ENCODE measurements at regions of chr16 and their contacts with region 1.

Region 1: DNA sequence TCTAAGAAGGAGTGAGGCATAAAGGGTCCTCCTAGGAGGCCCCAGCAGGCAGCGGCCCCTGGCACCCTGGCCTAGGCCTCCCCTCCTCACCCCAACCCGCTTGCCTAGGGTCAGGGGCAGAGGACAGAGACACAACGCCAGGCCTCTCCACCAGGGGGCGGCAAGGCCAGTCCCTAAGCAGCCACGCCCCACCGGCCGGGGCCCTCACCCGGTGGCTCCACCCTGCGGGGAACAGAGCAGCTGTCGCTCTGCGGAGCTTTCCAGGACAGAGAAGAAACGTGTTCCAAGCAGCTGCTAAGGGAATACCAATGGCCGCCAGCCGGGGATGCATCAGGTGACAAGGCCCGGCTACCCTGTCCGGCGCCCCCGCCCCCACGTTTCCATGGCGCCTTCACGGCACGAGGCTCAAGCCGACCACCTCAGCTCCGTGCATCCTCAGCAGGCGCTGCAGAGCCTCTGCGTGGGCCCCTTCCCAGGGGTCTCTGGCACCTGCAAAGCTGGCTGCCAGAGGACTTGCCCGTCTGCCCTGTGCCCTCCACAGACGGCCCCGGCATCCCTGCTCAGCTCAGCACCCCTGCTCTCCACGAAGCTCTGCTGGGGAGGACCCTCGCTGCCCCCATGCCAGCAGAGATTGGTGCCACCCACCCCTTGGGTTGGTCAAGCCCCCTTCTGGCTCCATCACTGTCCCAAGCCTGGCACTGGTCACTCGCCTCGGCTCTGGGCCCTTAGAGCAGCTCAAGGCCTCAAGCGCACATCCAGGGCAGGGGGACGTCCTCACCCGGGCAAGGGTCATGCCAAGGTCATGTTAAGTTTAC is 5.6 kb downstream of the ZNF598 start:
- H3K4me3 ChIP-seq: no peak overlapping the region
- H3K27ac ChIP-seq: peak overlapping the region; percentile 61; the same call in 1 of the 2 replicates
- H3K4me1 ChIP-seq: peaks cover 27% of the 10 kb centered on the region
- CTCF ChIP-seq: peak; percentile 99

Region 2: DNA sequence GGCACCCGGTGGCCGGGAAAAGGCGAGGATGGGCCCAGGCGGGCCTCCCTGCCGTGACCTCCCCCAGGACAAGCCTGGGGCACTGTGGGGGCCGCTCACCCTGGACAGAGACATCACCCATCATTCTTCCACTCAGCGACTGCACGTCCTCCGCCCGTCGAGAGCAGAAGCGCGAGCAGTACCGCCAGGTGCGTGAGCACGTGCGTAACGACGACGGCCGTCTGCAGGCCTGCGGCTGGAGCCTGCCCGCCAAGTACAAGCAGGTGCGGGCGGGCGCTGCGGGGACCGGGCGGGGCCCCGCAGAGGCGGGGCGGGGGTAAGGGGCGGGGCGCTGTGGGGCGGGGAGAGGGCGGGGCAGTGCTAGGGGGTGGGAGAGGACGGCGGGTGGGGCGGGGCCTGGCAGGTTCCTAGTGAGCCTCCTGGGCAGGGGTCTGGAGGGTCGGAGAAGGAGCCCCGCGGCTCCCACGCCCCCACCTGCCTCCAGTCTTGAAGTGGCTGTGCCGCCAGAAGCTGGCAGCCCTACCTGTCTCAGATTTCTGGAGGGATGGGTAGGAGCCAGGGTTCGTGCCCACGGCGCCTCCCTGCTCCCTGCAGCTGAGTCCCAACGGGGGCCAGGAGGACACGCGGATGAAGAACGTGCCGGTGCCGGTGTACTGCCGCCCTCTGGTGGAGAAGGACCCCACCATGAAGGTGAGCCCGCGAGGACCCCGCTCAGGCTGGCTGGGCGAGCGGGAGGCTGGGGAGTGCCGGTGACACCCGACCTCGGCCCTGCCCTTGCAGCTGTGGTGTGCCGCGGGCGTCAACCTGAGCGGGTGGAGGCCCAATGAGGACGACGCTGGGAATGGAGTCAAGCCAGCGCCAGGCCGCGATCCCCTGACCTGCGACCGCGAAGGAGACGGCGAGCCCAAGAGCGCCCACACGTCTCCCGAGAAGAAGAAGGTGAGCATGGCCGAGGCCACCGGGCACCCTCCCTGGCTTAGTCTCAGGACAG is 240.2 kb before region 1 on chr16:
- CTCF ChIA-PET with region 1: no interaction called
- POLR2A ChIA-PET with region 1: no interaction called
- H3K4me3 ChIP-seq: no peak overlapping the region
- H3K27ac ChIP-seq: no peak overlapping the region
- H3K4me1 ChIP-seq: no peaks in the 10 kb centered on the region
- CTCF ChIP-seq: peak; percentile 34

Region 3: GRCh38 chr16:1863681-1864460 is 140.2 kb before region 1 on chr16:
- CTCF ChIA-PET with region 1: interaction called, 34 read pairs
- POLR2A ChIA-PET with region 1: interaction called, 4 read pairs
- H3K4me3 ChIP-seq: no peak overlapping the region
- H3K27ac ChIP-seq: no peak overlapping the region
- H3K4me1 ChIP-seq: no peaks in the 10 kb centered on the region; the same call in 1 of the 2 replicates
- CTCF ChIP-seq: no peak

Region 4: DNA sequence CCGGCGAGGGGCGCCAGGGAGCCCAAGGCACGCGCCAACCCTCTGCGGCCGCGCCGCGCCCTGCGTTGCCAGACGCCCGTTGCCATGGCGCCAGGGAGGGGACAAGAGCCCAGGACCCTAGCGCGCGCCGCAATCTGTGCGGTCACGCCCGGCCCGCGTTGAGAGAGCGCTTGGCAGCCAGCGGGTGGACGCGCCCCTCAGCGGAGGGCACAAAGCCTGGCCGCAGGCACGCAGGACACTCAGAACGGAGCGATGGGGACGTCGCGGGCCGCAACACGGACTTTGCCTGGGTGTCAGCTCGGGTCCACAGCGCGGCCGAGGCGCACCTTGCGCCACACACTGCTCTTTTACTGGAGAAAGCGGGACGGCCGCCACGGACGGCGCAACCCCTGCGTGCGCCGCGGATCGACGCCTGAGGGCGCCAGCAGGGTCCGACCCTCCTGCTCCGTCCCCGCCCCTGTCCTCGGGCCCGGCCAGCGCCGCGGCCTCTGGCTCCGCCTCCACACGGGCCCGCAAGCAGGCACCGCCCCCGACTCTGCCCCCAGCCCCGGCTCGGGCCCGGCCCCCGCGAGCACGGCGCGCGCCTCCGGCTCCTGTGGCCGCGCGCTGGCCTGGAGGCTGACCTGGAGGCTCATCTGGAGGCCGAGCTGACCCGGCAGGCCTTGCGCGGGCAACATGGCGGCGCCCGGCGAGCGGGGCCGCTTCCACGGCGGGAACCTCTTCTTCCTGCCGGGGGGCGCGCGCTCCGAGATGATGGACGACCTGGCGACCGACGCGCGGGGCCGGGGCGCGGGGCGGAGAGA is 20.3 kb before region 1 on chr16 and contains the start of gene GFER:
- CTCF ChIA-PET with region 1: interaction called, 28 read pairs
- POLR2A ChIA-PET with region 1: interaction called, 4 read pairs
- H3K4me3 ChIP-seq: peak within 1 kb of the TSS; percentile 73
- H3K27ac ChIP-seq: peak within 1 kb of the TSS; percentile 83
- H3K4me1 ChIP-seq: peaks cover 7% of the 10 kb centered on the region; the same call in 1 of the 2 replicates
- CTCF ChIP-seq: peak; percentile 91

Region 5: DNA sequence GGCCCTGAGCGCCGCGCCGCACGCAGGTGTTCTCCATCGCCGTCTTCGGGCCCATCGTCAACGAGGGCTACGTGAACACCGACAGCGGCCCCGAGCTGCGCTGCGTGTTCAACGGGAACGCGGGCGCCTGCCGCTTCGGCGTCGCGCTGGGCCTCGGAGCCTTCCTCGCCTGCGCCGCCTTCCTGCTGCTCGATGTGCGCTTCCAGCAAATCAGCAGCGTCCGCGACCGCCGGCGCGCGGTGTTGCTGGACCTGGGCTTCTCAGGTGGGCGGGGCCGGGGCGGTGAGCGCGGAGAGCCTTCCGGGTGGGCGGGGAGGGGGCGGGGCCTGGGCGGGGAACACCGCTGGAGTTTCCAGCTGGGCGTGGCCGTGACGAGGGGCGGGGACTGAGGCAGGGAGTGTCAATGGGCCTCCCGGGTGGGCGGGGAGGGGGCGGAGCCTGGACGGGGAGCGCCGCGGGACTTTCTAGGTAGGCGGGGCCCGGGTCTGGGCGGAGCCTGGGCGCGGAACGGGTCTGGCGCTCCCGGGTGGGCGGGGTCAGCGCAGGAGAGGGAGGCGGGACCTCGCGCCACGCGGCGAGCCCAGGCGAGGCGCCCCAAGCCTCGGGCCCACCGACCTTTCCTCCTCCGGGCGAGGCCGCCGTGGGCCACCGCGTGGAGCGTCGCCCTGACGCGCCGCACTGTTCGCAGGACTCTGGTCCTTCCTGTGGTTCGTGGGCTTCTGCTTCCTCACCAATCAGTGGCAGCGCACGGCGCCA is 11.9 kb before region 1 on chr16:
- CTCF ChIA-PET with region 1: interaction called, 39 read pairs
- POLR2A ChIA-PET with region 1: interaction called, 4 read pairs
- H3K4me3 ChIP-seq: no peak overlapping the region
- H3K27ac ChIP-seq: no peak overlapping the region
- H3K4me1 ChIP-seq: peaks cover 3% of the 10 kb centered on the region
- CTCF ChIP-seq: no peak

Region 6: DNA sequence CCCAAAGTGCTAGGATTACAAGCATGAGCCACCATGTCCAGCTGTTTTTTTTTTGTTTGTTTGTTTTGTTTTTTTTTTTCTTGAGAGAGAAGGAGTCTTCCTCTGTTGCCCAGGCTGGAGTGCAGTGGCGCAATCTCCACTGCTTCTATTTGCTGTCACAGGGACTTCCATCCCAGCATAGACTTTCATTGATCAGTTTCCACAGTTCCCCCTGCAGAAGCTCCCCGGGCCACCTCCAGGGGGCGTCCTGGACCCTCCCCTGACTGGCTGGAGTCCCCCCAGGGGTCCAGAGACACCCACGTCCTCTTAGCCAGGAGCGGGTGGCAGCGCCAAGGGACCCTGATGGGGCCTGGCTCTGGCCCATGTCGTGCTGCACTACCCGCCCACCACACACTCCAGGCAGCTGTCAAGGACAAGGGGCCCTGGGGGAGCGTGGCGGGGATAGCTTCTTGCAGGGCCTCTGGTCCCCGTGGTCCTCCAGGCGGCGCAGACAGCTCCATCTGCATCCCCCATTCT is 12.4 kb after region 1 on chr16:
- CTCF ChIA-PET with region 1: interaction called, 11 read pairs
- POLR2A ChIA-PET with region 1: interaction called, 5 read pairs
- H3K4me3 ChIP-seq: no peak overlapping the region
- H3K27ac ChIP-seq: no peak overlapping the region
- H3K4me1 ChIP-seq: peaks cover 6% of the 10 kb centered on the region
- CTCF ChIP-seq: peak; percentile 52

Region 7: DNA sequence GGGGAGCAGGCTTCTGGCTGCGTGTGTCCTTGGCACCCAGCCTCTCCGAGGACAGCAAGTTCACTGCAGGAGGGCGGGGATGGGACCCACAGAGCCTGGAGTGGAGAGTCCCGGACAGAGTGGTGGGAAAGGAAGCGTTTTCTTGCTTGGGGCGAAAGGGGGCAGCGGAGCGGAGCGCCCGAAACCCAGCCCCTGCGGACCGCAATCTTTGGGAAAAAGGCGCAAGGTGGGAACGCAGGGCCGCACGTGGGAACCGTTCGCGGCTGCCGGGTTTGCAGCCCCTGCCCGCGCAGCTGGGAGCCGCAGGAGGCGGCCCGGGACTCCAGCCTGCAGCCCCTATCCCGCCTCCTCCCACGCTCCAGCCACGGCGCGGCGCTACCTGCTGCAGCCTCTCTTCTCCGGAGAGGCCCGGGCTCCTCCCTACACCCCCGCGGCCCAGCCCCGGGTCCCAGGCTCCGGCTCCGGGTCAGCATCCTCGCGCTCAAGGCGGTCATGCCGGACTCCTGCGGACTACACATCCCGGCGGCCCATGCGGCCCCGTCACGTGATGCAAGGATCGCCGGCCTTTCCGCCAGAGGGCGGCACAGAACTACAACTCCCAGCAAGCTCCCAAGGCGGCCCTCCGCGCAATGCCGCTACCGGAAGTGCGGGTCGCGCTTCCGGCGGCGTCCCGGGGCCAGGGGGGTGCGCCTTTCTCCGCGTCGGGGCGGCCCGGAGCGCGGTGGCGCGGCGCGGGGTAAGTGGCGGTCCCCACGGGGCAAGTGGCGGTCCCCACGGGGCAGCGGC is 43.5 kb after region 1 on chr16 and contains the starts of genes NTHL1 and TSC2:
- CTCF ChIA-PET with region 1: interaction called, 12 read pairs
- POLR2A ChIA-PET with region 1: interaction called, 6 read pairs
- H3K4me3 ChIP-seq: peak within 1 kb of the TSS; percentile 82
- H3K27ac ChIP-seq: peak within 1 kb of the TSS; percentile 58; the same call in 1 of the 2 replicates
- H3K4me1 ChIP-seq: no peaks in the 10 kb centered on the region
- CTCF ChIP-seq: peak; percentile 90

Region 8: GRCh38 chr16:2090777-2091546 is 86.9 kb after region 1 on chr16:
- CTCF ChIA-PET with region 1: no interaction called
- POLR2A ChIA-PET with region 1: no interaction called
- H3K4me3 ChIP-seq: no peak overlapping the region
- H3K27ac ChIP-seq: no peak overlapping the region
- H3K4me1 ChIP-seq: no peaks in the 10 kb centered on the region
- CTCF ChIP-seq: no peak

Region 9: DNA sequence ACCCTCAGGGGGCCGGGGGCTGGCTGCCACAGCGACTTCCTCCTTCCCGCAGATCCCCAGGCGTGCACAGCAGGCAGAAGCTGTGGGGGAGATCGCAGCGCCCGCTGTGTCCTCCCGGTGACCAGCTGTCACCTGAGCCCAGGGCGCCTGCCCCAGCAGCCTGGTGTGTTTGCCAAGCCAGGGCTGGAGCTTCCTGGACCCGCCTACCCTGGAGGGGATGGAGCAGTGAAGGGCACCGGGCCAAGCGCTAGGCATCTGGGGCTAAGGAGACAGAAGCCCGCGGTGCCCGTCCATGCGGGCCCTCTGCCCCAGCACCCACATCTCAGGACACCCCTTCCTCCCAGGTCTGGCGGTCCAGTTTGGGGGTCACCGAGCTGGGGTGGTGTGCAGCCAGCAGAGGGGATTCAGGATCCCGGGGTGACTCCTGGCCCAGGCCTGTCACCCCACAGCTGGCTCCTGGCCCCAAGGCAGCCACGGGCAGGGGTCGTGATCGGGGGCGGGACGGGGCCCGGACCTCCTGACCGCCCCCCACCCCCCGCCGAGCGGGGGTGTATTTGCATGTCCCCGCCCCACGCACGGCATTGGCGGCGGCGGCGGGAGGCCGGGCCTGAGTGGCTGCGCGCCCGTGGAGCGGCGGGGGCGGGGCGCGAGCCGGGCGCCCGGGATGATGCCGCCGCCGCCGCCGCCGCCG is 144.1 kb after region 1 on chr16 and contains the start of gene RAB26:
- CTCF ChIA-PET with region 1: interaction called, 13 read pairs
- POLR2A ChIA-PET with region 1: no interaction called
- H3K4me3 ChIP-seq: peak within 1 kb of the TSS; percentile 43
- H3K27ac ChIP-seq: peak within 1 kb of the TSS; percentile 44; the same call in 1 of the 2 replicates
- H3K4me1 ChIP-seq: peaks cover 4% of the 10 kb centered on the region
- CTCF ChIP-seq: peak; percentile 18; the same call in 1 of the 2 replicates

Region 10: DNA sequence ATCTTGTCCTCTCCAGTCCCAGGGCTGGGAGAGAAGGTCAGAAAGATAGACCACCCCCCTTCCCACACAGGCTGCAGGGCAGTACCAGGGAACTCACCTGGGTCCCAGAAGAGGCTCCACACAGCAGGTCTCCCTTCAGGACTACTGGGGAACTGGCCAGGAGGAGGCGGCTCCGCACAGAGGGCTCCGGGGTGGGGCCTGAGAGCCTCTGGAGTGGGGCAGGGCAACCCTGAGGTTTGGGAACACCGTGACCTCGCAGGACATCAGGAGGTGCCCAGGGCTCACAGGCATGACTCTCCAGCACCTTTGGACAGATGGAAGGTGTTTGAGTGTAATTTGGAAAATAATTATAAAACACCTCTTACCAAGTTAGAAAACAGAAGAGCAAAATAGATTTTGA is 325.5 kb after region 1 on chr16:
- CTCF ChIA-PET with region 1: no interaction called
- POLR2A ChIA-PET with region 1: no interaction called
- H3K4me3 ChIP-seq: no peak overlapping the region
- H3K27ac ChIP-seq: no peak overlapping the region
- H3K4me1 ChIP-seq: no peaks in the 10 kb centered on the region
- CTCF ChIP-seq: no peak